Activated T-helper 2 cell treated with anti-CD3 and anti-CD28 coated beads, Interferon-gamma antibody, Interleukin-2, Interleukin-4, amounts not matched to agents 10 μg/mL and 5 μg/mL and 100 μg/mL, durations not matched to agents 14 hours and 24 hours and 36 hours (primary cell): ENCODE measurements at regions of chr6 and their contacts with region 1.

Region 1: DNA sequence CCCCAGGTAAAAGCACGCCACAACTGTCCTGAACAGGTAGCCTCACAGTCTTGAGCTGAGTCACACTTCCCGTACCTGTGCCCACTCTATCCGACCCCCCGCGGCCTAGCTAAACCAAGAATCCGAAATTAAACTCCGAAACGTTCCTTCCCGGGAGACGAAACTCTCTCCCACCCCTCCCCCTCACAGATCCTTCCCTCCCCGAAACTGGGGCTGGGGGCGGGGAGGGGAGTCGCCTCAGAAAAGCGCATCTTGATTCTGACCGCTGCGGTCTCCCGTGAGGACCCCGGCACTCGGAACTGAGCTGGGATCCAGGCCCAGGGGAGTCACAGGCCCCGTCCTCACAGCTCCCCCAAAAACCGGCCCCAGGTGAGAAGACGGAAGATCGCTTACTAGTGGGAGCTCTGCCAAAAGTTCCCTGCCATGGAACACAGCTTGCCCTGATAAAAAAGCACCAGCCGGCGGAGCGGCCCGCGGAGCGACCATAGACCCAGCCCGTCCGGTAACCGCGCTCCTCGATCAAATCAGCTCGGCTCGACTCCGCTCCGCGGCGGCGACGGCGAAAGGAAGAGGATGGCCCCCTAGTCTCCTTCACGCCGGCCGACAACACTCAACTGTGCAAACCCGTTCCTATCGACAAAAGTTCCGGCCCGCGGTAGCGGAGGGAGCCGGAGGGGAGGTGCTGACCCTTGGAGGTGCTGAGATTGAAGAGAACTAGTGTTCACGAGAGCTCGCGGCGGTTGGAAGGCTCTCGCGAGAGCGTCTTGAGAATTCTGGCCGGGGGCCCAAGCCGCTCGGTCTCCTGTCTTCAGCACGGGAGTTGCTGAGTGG is at the start of gene CCNC:
- DNase-seq: peak; percentile 88
- H3K4me3 Mint-ChIP-seq: peak within 1 kb of the TSS; percentile 98
- H3K27ac Mint-ChIP-seq: peak within 1 kb of the TSS; percentile 93
- H3K4me1 Mint-ChIP-seq: peaks cover 17% of the 10 kb centered on the region
- H3K27me3 Mint-ChIP-seq: peaks cover 2% of the 10 kb centered on the region
- total RNA-seq, gene CCNC: 49.2 and 52.1 TPM in 2 replicates

Region 2: GRCh38 chr6:99520855-99521632 is 47.3 kb before region 1 on chr6:
- intact Hi-C with region 1: loop called (anchors 1 kb)
- DNase-seq: peak; percentile 68
- H3K4me3 Mint-ChIP-seq: peak overlapping the region; percentile 98
- H3K27ac Mint-ChIP-seq: peak overlapping the region; percentile 96
- H3K4me1 Mint-ChIP-seq: peaks cover 14% of the 10 kb centered on the region
- H3K27me3 Mint-ChIP-seq: peaks cover 9% of the 10 kb centered on the region

Region 3: GRCh38 chr6:100057941-100058340 is 489.6 kb after region 1 on chr6:
- intact Hi-C with region 1: no loop called
- DNase-seq: no peak
- H3K4me3 Mint-ChIP-seq: no peak overlapping the region
- H3K27ac Mint-ChIP-seq: no peak overlapping the region
- H3K4me1 Mint-ChIP-seq: no peaks in the 10 kb centered on the region
- H3K27me3 Mint-ChIP-seq: no peaks in the 10 kb centered on the region